Activated CD4-positive, alpha-beta T cell treated with anti-CD3 and anti-CD28 coated beads for 36 hours (primary cell): ENCODE measurements at regions of chr13 and their contacts with region 1.

Region 1: DNA sequence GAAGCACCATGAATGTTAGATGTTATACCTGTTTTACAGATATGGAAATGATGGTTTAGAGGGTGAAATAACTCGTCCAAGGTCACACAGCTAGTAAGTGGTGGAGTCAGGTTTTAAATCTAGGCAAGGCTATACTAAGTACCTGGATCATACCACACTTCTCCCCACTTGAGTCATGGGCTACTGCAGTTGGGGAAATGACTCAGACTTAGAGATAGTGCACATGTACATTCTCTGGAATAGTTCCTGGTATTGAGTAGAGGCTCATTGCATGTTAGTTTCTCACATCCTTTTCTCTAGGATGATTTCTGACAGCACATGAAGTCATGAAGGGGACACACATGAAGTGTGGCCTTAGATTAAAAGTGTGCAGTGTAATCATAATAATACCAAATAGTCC is 76.2 kb upstream of the TNFSF11 start:
- DNase-seq: peak; percentile 56
- ATAC-seq: peak; percentile 86
- H3K4me3 Mint-ChIP-seq: no peak overlapping the region
- H3K27ac Mint-ChIP-seq: peak overlapping the region; percentile 71
- H3K4me1 Mint-ChIP-seq: peaks cover 54% of the 10 kb centered on the region
- H3K27me3 Mint-ChIP-seq: no peaks in the 10 kb centered on the region

Region 2: DNA sequence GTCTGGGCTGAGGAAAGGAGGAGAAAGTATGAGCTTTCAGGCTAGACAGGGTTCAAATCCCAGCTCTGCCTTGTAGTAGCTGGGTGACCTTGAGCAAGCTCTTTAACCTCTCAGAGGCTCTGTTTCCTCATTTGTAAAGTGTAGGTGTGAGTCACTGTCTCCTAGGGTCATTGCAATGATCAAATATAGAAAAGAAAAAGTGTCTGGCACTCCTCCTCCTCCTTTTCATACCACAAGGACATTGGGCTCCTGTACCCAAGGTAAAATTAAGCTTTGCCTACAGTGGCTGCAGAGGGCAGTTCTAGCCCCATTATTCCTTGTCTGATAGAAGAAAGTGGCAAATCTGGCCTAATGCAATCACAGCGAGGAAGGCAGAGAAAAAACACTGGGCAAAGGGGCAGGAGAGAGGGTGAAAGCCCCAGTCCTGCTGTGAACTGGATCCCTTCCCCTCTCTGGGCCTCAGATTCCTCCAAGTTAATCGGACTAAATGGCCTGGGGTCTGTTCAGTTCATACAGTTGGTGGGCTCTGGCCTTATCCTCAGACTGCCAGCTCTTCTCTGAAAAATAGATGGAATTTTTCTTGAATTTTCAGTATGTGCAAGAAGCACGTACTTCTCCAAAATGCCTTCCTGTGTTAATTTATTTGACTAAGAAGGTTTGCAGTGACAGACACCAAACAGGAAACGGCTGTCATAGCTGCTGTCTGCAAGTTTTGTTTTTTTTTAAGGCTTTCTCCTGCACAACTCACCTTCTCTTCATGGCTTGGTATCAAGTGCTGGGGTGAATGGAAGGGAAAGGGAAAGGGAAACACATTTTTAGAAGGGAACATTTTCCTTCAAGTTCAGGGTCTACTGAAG is 1005.2 kb before region 1 on chr13:
- CTCF ChIA-PET with region 1: no interaction called
- POLR2A ChIA-PET with region 1: no interaction called
- intact Hi-C with region 1: loop called in 1 of 2 experiments (anchors 5 kb)
- DNase-seq: peak; percentile 44
- ATAC-seq: peak; percentile 76
- H3K4me3 Mint-ChIP-seq: peak overlapping the region; percentile 29
- H3K27ac Mint-ChIP-seq: peak overlapping the region; percentile 92
- H3K4me1 Mint-ChIP-seq: peaks cover 89% of the 10 kb centered on the region
- H3K27me3 Mint-ChIP-seq: no peaks in the 10 kb centered on the region

Region 3: GRCh38 chr13:42279080-42279479 is 218.7 kb before region 1 on chr13:
- CTCF ChIA-PET with region 1: no interaction called
- POLR2A ChIA-PET with region 1: no interaction called
- intact Hi-C with region 1: loop called (anchors 1 to 5 kb)
- DNase-seq: peak; percentile 58
- ATAC-seq: no peak
- H3K4me3 Mint-ChIP-seq: no peak overlapping the region
- H3K27ac Mint-ChIP-seq: no peak overlapping the region
- H3K4me1 Mint-ChIP-seq: peaks cover 47% of the 10 kb centered on the region
- H3K27me3 Mint-ChIP-seq: no peaks in the 10 kb centered on the region

Region 4: GRCh38 chr13:42367831-42368230 is 130.0 kb before region 1 on chr13:
- CTCF ChIA-PET with region 1: interaction called, 3 read pairs
- POLR2A ChIA-PET with region 1: interaction called, 3 read pairs
- intact Hi-C with region 1: loop called in 1 of 2 experiments (anchors 2 kb)
- DNase-seq: no peak
- ATAC-seq: peak; percentile 20
- H3K4me3 Mint-ChIP-seq: no peak overlapping the region
- H3K27ac Mint-ChIP-seq: no peak overlapping the region
- H3K4me1 Mint-ChIP-seq: peaks cover 49% of the 10 kb centered on the region
- H3K27me3 Mint-ChIP-seq: no peaks in the 10 kb centered on the region

Region 5: DNA sequence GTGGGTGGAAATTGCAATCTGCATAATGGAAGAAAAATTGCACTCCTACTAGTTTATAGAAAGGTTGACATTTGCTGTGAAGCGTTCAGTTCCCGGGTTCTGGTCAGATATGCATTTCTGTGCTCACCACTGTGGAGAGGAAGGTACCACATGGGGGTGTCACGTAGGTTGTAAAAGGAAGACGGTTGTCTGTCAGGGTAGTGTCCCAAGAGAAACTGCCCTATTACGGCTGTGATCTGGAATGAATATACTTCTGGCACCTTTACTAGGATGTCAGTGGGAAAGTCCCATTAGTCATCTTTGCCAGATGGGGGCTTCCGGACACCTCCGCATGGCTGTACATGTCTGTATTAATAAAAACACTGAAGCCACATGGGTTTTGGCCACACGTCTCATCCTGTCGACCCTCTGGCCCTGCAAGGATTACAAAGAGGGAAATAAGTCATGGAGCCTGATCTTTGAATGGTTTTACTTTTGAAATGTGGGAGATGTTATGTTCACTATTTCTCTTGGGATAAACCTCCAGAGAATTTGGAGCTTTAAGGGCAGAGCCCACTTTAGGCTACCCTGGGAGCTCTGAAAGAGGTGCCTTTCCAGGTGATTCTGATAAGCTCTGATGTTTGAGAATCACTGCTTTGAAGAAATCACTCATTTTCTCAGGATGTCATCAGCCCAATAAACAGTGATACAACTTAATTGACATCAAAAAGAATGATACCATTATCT is 92.0 kb before region 1 on chr13:
- CTCF ChIA-PET with region 1: interaction called, 4 read pairs
- POLR2A ChIA-PET with region 1: interaction called, 7 read pairs
- intact Hi-C with region 1: loop called (anchors 1 kb)
- DNase-seq: peak; percentile 83
- ATAC-seq: peak; percentile 86
- H3K4me3 Mint-ChIP-seq: peak overlapping the region; percentile 48
- H3K27ac Mint-ChIP-seq: peak overlapping the region; percentile 94
- H3K4me1 Mint-ChIP-seq: peaks cover 62% of the 10 kb centered on the region
- H3K27me3 Mint-ChIP-seq: no peaks in the 10 kb centered on the region

Region 6: GRCh38 chr13:42574435-42575311 is 76.9 kb after region 1 on chr13:
- CTCF ChIA-PET with region 1: interaction called, 3 read pairs
- POLR2A ChIA-PET with region 1: no interaction called
- intact Hi-C with region 1: loop called (anchors 2 kb)
- DNase-seq: peak; percentile 82
- ATAC-seq: peak; percentile 82
- H3K4me3 Mint-ChIP-seq: peak overlapping the region; percentile 77
- H3K27ac Mint-ChIP-seq: peak overlapping the region; percentile 86
- H3K4me1 Mint-ChIP-seq: peaks cover 41% of the 10 kb centered on the region
- H3K27me3 Mint-ChIP-seq: peaks cover 34% of the 10 kb centered on the region

Region 7: GRCh38 chr13:43180837-43181236 is 683.0 kb after region 1 on chr13:
- CTCF ChIA-PET with region 1: no interaction called
- POLR2A ChIA-PET with region 1: no interaction called
- intact Hi-C with region 1: no loop called
- DNase-seq: no peak
- ATAC-seq: no peak
- H3K4me3 Mint-ChIP-seq: no peak overlapping the region
- H3K27ac Mint-ChIP-seq: no peak overlapping the region
- H3K4me1 Mint-ChIP-seq: no peaks in the 10 kb centered on the region
- H3K27me3 Mint-ChIP-seq: no peaks in the 10 kb centered on the region

Region 8: GRCh38 chr13:43797869-43798268 is 1300.1 kb after region 1 on chr13:
- CTCF ChIA-PET with region 1: no interaction called
- POLR2A ChIA-PET with region 1: no interaction called
- intact Hi-C with region 1: loop called in 1 of 2 experiments (anchors 5 kb)
- DNase-seq: no peak
- ATAC-seq: no peak
- H3K4me3 Mint-ChIP-seq: no peak overlapping the region
- H3K27ac Mint-ChIP-seq: no peak overlapping the region
- H3K4me1 Mint-ChIP-seq: peaks cover 34% of the 10 kb centered on the region
- H3K27me3 Mint-ChIP-seq: peaks cover 31% of the 10 kb centered on the region